AG04449 (cell line): ENCODE measurements at regions of chr7 and their contacts with region 1.

Region 1: GRCh38 chr7:87416682-87417587 is 58.5 kb downstream of the ABCB4 start:
- DNase-seq: peak; percentile 10
- H3K4me3 ChIP-seq: no peak overlapping the region
- CTCF ChIP-seq: peak; percentile 40

Region 2: DNA sequence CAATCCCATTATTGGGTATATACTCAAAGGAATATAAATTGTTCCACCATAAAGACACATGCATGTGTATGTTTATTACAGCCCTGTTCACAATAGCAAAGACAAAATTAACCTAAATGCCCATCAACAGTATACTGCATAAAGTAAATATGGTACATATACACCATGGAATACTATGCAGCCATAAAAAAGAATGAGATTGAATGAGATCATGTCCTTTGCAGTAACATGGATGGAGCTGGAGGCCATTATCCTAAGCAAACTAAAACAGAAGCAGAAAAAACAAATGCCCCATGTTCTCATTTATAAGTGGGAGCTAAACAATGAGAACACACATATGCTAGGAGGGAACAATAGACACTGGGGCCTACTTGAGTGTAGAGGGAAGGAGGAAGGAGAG is 116.2 kb before region 1 on chr7:
- CTCF ChIA-PET with region 1: interaction called, 18 read pairs
- POLR2A ChIA-PET with region 1: no interaction called
- DNase-seq: no peak
- H3K4me3 ChIP-seq: no peak overlapping the region
- CTCF ChIP-seq: no peak

Region 3: GRCh38 chr7:87312215-87312865 is 104.6 kb before region 1 on chr7:
- CTCF ChIA-PET with region 1: interaction called, 488 read pairs
- POLR2A ChIA-PET with region 1: interaction called, 3 read pairs
- DNase-seq: peak; percentile 17
- H3K4me3 ChIP-seq: no peak overlapping the region
- CTCF ChIP-seq: peak; percentile 95

Region 4: DNA sequence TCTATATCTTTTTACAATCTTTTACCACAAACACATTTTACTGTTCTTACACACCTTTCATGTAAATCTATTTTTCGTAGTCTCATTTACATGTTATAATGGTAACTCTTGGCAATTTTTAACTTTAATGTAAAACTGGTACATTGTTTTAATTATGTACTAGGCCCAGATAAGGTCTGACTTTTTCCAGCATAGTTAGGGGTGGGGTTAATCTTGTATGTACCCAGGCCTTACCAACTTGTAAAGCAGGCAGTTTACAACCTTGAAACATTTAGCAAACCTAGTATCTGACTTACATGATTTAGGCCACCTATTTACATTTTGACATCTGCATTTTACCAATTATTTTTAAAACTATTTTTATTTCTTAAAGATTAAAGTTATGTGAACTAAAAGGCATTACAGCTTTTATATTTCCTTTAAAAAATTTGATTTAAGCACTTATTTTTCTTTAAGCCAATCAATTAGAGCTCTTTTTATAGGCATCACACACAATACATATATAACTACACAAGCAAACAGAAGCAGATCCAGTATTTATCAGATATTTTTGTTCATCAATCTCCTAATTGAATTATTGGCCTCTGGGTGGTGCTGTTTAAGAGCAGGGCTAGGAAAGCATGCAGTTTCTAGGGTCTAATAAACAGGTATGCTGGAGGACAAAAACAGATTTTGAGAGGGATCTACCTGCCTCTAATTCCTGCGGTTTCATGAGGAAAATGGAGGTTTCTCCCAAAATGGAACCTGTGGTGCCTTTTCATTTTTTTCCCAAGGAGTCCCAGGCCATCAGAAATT is 91.2 kb before region 1 on chr7:
- CTCF ChIA-PET with region 1: interaction called, 488 read pairs
- POLR2A ChIA-PET with region 1: no interaction called
- DNase-seq: no peak
- H3K4me3 ChIP-seq: no peak overlapping the region
- CTCF ChIP-seq: no peak

Region 5: DNA sequence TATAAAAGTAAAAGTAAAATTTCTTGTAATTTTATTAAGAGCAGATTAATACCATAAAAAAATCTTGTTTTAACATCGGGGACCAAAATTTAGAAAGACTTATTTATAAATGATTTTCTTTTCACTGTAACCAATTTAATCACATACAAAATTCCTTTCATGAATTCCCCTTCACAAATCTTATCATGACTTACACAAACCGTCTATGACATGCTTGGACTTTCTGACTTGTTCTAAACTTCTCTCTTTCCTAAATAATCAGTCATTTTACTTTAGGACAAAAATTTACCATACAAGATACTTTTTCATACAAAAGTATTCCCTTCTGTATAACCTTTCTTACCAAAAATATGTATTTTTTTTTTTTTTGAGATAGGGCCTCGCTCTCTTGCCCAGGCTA is 62.2 kb before region 1 on chr7:
- CTCF ChIA-PET with region 1: no interaction called
- POLR2A ChIA-PET with region 1: no interaction called
- DNase-seq: no peak
- H3K4me3 ChIP-seq: no peak overlapping the region
- CTCF ChIP-seq: no peak

Region 6: GRCh38 chr7:87398446-87398845 is 18.5 kb before region 1 on chr7:
- CTCF ChIA-PET with region 1: interaction called, 47 read pairs
- POLR2A ChIA-PET with region 1: no interaction called
- DNase-seq: peak; percentile 82
- H3K4me3 ChIP-seq: no peak overlapping the region
- CTCF ChIP-seq: no peak

Region 7: DNA sequence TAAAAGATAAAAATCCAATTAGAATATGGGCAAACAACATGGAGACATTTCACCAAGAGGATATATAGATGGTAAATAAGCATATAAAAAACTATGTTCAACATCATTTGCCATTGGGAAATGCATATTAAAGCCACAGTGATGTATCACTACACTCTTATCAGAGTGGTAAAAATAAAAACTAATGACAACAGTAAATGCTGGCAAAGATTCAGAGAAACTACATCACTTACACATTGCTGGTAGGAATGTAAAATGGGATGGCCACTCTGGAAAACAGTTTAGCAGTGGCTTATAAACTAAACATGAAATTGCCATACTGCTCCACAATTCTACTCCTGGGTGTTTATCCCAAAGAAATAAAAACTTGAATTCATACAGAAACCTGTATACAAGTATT is 12.3 kb before region 1 on chr7:
- CTCF ChIA-PET with region 1: interaction called, 47 read pairs
- POLR2A ChIA-PET with region 1: no interaction called
- DNase-seq: peak; percentile 10
- H3K4me3 ChIP-seq: no peak overlapping the region
- CTCF ChIP-seq: no peak

Region 8: GRCh38 chr7:87427288-87427687 is 10.4 kb after region 1 on chr7:
- CTCF ChIA-PET with region 1: interaction called, 36 read pairs
- POLR2A ChIA-PET with region 1: no interaction called
- DNase-seq: no peak
- H3K4me3 ChIP-seq: no peak overlapping the region
- CTCF ChIP-seq: no peak